ENCODE measurements at regions of chr12 and their contacts with region 1.

Region 1: GRCh38 chr12:127429551-127430285 is 837.3 kb upstream of the TMEM132C start:
- DNase-seq: no peak
- H3K4me3 Mint-ChIP-seq: no peak overlapping the region
- H3K27ac Mint-ChIP-seq: no peak overlapping the region
- H3K4me1 Mint-ChIP-seq: no peaks in the 10 kb centered on the region
- H3K27me3 Mint-ChIP-seq: no peaks in the 10 kb centered on the region

Region 2: DNA sequence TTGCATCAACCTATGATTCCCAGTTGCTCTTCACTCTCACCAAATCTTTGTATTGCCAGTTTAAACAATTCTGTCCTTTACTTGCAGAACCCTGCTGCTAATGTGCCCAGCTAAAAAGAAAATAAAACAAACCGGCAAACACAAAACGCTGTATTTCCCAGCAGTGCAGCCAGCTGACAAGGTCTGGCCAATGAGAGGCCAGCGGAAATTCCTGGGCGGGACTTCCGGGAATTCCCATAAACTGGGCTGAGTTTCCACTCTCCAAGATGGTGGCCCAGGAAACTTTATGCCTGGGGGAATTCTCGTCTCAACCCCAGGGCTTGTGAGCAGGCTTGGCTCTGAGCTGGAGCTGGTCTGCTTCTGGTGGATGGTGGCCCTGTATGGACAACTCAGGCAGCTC is 30.0 kb after region 1 on chr12:
- CTCF ChIA-PET with region 1: no interaction called
- POLR2A ChIA-PET with region 1: no interaction called
- intact Hi-C with region 1: loop called (anchors 1 kb)
- DNase-seq: no peak
- H3K4me3 Mint-ChIP-seq: no peak overlapping the region
- H3K27ac Mint-ChIP-seq: no peak overlapping the region
- H3K4me1 Mint-ChIP-seq: no peaks in the 10 kb centered on the region
- H3K27me3 Mint-ChIP-seq: peaks cover 8% of the 10 kb centered on the region

Region 3: DNA sequence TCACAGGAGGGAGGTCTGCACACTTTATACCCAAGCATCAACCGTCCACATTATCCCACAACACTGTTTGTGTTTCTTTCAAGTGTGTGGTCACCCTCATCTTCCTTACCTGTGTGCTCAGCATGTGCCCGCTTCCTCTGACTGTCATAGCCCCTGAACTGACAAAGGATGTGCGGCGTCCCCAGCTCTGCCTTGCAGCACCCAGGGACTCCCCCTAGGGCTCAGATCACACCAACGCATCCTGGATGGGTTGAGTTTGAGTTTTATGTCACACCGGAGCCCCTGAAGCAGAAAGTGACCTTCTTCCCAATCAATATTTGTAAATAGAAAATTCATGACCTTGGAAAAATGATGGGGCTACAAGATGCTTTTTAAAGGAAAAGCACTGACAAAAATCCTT is 66.5 kb after region 1 on chr12:
- CTCF ChIA-PET with region 1: no interaction called
- POLR2A ChIA-PET with region 1: no interaction called
- intact Hi-C with region 1: no loop called
- DNase-seq: no peak
- H3K4me3 Mint-ChIP-seq: no peak overlapping the region
- H3K27ac Mint-ChIP-seq: no peak overlapping the region
- H3K4me1 Mint-ChIP-seq: no peaks in the 10 kb centered on the region
- H3K27me3 Mint-ChIP-seq: no peaks in the 10 kb centered on the region